ENCODE measurements at regions of chr21 and their contacts with region 1.

Region 1: DNA sequence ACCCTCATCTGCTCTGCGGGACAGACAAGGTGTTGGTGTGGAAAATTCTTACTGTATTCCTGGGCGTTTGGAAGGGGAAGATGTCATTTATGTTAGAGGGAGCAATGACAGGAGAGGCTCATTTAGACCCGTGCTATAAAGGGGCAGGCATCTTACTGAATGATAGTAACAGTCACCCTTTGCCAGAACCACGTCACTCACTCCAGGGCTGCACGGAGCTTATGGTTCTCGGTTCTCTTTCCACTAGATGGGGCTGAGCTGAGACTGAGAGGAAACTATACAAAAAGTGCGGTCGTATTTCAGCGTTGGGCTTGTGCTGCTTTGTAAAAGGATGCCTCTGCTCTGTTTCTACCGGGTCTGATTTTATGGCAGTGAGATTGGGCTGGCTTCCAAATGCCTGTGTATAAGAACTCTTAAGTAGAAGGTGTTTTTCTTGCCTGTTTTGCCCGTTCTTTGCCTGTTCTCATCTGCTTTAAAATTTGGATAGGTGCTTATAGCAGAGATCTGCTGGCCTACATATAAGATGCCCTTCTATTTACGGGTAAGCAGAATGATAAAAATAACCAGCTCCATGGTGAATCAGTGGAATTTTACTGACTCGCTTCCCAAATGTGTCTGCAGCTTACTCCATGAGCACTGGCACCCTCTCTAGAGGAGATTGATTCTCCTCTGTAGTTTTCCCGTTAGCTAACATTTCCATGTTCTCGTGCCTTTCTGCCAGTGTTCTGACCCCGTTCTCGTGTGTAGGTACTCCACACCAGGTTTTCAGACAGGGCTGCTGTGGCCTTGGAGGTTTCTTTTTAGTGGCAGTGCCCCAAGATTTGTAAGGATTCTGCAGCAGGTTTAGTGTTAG is 55.9 kb downstream of the MRPS6 start:
- DNase-seq: peak in 1 of 2 donors; percentile 85
- H3K4me3 ChIP-seq: peak overlapping the region; percentile 21 to 53
- H3K27ac ChIP-seq: peak overlapping the region; percentile 91 to 92
- H3K4me1 ChIP-seq: peaks cover 44 to 80% of the 10 kb centered on the region in 2 donors
- H3K27me3 ChIP-seq: no peaks in the 10 kb centered on the region
- CTCF ChIP-seq: peak in 2 of 3 experiments; percentile 46 to 51

Region 2: GRCh38 chr21:33924079-33924765 is 205.0 kb before region 1 on chr21:
- intact Hi-C with region 1: loop called (anchors 10 kb)
- DNase-seq: peak in 1 of 2 donors; percentile 91
- H3K4me3 ChIP-seq: peak overlapping the region in 1 of 2 donors; percentile 37
- H3K27ac ChIP-seq: peak overlapping the region; percentile 51 to 62
- H3K4me1 ChIP-seq: peaks cover 0 to 7% of the 10 kb centered on the region in 2 donors
- H3K27me3 ChIP-seq: no peaks in the 10 kb centered on the region
- CTCF ChIP-seq: peak; percentile 87 to 93 (median 90)

Region 3: DNA sequence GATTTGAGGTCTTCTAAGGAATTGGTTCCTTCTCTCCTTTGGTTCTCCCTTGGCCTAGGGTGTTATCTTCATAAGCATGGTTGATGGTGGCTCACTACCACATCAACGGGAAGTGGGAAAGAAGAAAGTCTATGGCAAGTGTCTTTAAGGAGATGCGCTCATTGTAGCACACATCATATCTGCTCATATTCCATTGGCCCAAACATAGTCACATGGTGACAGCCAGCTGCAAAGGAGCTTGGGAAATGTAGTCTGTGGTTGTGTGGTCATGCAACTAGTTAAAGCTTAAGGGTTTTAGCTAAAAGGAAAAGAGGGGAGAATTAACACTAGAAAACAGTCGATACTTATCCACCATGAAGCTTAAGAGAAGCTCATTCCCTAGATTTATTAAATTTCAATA is 67.3 kb before region 1 on chr21:
- intact Hi-C with region 1: no loop called
- DNase-seq: no peak
- H3K4me3 ChIP-seq: no peak overlapping the region
- H3K27ac ChIP-seq: no peak overlapping the region
- H3K4me1 ChIP-seq: no peaks in the 10 kb centered on the region
- H3K27me3 ChIP-seq: no peaks in the 10 kb centered on the region
- CTCF ChIP-seq: no peak

Region 4: GRCh38 chr21:34073032-34073869 is 56.0 kb before region 1 on chr21 and contains the starts of genes MRPS6 and SLC5A3:
- intact Hi-C with region 1: loop called (anchors 2 kb)
- DNase-seq: peak in 1 of 2 donors; percentile 90
- H3K4me3 ChIP-seq: peak within 1 kb of the TSS; percentile 75 to 93
- H3K27ac ChIP-seq: peak within 1 kb of the TSS; percentile 74 to 92
- H3K4me1 ChIP-seq: peaks cover 7 to 16% of the 10 kb centered on the region in 2 donors
- H3K27me3 ChIP-seq: no peaks in the 10 kb centered on the region
- CTCF ChIP-seq: no peak
- total RNA-seq, gene MRPS6: 17.8 TPM
- total RNA-seq, gene SLC5A3: 8.4 TPM

Region 5: GRCh38 chr21:34151545-34151944 is 22.3 kb after region 1 on chr21:
- intact Hi-C with region 1: loop called (anchors 2 kb)
- DNase-seq: no peak
- H3K4me3 ChIP-seq: no peak overlapping the region
- H3K27ac ChIP-seq: peak overlapping the region in 1 of 2 donors; percentile 25
- H3K4me1 ChIP-seq: peaks cover 13 to 47% of the 10 kb centered on the region in 2 donors
- H3K27me3 ChIP-seq: no peaks in the 10 kb centered on the region
- CTCF ChIP-seq: no peak

Region 6: GRCh38 chr21:34202553-34203372 is 73.5 kb after region 1 on chr21:
- intact Hi-C with region 1: loop called (anchors 2 kb)
- DNase-seq: peak in 1 of 2 donors; percentile 73
- H3K4me3 ChIP-seq: peak overlapping the region; percentile 59 to 68
- H3K27ac ChIP-seq: peak overlapping the region; percentile 84 to 85
- H3K4me1 ChIP-seq: peaks cover 0 to 45% of the 10 kb centered on the region in 2 donors
- H3K27me3 ChIP-seq: no peaks in the 10 kb centered on the region
- CTCF ChIP-seq: no peak